Activated CD4-positive, alpha-beta T cell treated with anti-CD3 and anti-CD28 coated beads, Interleukin-2, amount 10 ng/mL, durations not matched to agents 7 days and 5 days (primary cell): ENCODE measurements at regions of chr17 and their contacts with region 1.

Region 1: DNA sequence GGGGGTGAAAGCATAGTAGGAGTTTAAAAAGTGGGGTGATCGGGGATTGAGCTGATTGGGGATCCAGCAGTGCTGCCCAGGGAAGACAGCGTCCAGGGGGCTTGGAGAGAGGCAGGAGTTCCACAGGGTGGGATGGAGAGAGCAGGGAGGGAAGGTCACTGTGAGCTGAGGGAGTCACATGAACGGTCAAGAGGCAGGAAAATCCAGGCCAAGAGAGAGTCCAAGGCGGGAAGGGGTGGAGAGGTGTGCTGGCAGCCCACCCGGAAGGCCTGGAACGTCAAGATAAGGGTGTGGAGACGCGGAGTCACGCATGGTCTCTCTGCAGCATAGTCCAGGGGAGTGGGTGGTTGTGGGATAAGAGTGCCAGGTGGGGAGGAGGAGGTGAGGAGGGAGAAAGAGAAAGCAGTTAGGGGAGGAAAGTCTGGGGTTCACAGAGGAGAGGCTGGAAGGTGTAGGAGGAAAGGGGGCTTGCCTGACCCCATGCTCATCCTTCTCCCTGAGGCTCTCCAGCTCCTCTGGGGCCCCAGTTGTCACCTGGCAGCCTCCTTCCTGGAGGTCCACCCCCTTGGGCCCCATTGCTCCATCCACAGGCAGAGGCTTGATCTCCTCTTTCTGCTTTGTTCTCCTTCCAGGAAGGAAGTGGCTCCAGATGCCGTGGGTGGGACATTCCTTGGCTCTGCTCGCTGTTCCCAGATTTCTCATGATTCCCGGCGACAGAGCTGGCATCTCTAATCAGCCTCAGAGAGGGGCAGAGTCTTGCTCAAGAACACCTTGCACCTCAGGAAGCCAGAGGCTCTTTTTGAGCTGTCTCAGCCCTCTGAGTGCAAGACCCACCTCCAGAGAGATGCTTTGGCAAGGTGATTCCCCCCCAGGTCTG is 28.7 kb downstream of the CCR7 start:
- DNase-seq: no peak
- H3K4me3 Mint-ChIP-seq: no peak overlapping the region
- H3K27ac Mint-ChIP-seq: peak overlapping the region; percentile 54
- H3K4me1 Mint-ChIP-seq: peaks cover 96% of the 10 kb centered on the region
- H3K27me3 Mint-ChIP-seq: peaks cover 2% of the 10 kb centered on the region

Region 2: GRCh38 chr17:40417609-40418427 is 118.7 kb before region 1 on chr17 and contains the start of gene TOP2A:
- CTCF ChIA-PET with region 1: interaction called, 73 read pairs
- POLR2A ChIA-PET with region 1: interaction called, 5 read pairs
- DNase-seq: peak; percentile 98
- H3K4me3 Mint-ChIP-seq: peak within 1 kb of the TSS; percentile 96
- H3K27ac Mint-ChIP-seq: peak within 1 kb of the TSS; percentile 96
- H3K4me1 Mint-ChIP-seq: peaks cover 45% of the 10 kb centered on the region
- H3K27me3 Mint-ChIP-seq: no peaks in the 10 kb centered on the region
- total RNA-seq, gene TOP2A: 504 to 522 TPM

Region 3: DNA sequence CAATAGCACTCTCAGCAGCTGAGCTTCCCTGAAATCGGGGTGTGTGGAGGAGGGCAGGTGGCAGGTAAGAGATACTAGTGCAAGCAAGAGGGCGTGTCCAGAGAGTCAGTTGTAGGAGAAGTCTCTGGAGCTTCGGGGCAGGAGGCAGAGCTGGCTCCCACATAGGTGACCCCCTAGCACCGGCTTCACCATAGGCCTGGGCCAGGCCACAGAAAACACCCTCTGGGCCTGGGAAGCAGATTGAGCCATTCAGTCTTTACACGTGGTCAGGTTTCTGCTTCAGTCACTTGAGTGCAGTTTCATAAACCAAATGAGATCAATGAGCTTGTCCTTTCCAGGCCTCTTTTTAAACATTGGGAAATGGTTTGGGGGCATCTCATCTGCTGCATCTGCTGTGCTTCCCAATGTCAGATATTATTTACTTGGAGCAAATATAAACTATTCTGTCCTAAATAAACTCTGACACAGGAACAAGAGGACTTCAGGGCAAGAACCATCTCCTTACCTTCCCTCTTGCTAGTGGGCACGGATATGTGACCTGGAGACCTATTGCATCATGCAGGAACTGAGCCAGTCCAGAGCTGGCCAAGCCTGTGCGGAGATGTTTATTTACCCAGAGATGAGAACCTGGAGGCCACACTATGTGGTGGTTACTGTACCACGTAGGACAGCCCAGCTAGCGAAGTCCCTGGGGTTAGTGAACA is 12.6 kb after region 1 on chr17:
- CTCF ChIA-PET with region 1: interaction called, 317 read pairs
- POLR2A ChIA-PET with region 1: no interaction called
- DNase-seq: peak; percentile 18
- H3K4me3 Mint-ChIP-seq: no peak overlapping the region
- H3K27ac Mint-ChIP-seq: peak overlapping the region; percentile 88
- H3K4me1 Mint-ChIP-seq: peaks cover 91% of the 10 kb centered on the region
- H3K27me3 Mint-ChIP-seq: no peaks in the 10 kb centered on the region

Region 4: DNA sequence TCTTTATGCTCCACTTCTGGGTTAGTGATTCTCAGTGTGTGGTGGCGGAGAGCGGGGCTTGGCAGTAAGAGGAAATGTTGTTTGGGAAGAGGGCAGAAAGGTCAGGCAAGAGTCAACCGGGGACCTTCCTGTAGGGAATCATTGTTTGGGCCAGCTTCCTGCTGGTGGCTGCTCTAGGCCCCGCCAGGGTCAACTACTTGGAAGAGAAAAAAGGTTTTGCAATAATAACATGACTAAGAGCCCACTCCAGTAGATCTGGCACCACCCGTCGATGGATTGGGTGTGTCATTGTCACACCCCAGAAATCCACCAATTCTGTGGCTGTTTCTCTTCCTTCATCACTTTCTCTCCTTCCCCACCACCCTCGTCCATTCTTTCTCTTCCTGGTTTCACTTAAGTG is 171.2 kb after region 1 on chr17:
- CTCF ChIA-PET with region 1: no interaction called
- POLR2A ChIA-PET with region 1: no interaction called
- DNase-seq: no peak
- H3K4me3 Mint-ChIP-seq: no peak overlapping the region
- H3K27ac Mint-ChIP-seq: no peak overlapping the region
- H3K4me1 Mint-ChIP-seq: no peaks in the 10 kb centered on the region
- H3K27me3 Mint-ChIP-seq: peaks cover 21% of the 10 kb centered on the region